Naive thymus-derived CD4-positive, alpha-beta T cell (primary cell): ENCODE measurements at regions of chr12 and their contacts with region 1.

Region 1: GRCh38 chr12:45728630-45729232 is 775 bp upstream of the ARID2 start:
- DNase-seq: peak; percentile 95 to 99 (median 98)
- ATAC-seq: peak; percentile 85
- H3K4me3 ChIP-seq: peak overlapping the region; percentile 91
- H3K4me3 Mint-ChIP-seq: peak overlapping the region; percentile 85 to 100 (median 98)
- H3K27ac ChIP-seq: peak overlapping the region; percentile 96
- H3K27ac Mint-ChIP-seq: peak overlapping the region; percentile 82 to 99 (median 99)
- H3K4me1 ChIP-seq: peaks cover 10 to 31% of the 10 kb centered on the region in 2 donors
- H3K4me1 Mint-ChIP-seq: peaks cover 13 to 39% (median 30%) of the 10 kb centered on the region in 7 donors
- H3K27me3 ChIP-seq: no peaks in the 10 kb centered on the region
- H3K27me3 Mint-ChIP-seq: no peaks in the 10 kb centered on the region

Region 2: GRCh38 chr12:43805860-43806736 is 1922.6 kb before region 1 on chr12 and contains the start of gene TWF1:
- CTCF ChIA-PET with region 1: no interaction called
- POLR2A ChIA-PET with region 1: interaction called, 4 read pairs
- intact Hi-C with region 1: loop called (anchors 1 to 2 kb)
- DNase-seq: peak; percentile 76 to 94 (median 89)
- ATAC-seq: peak; percentile 97
- H3K4me3 ChIP-seq: peak within 1 kb of the TSS; percentile 67
- H3K4me3 Mint-ChIP-seq: peak within 1 kb of the TSS; percentile 94 to 100 (median 100)
- H3K27ac ChIP-seq: peak within 1 kb of the TSS; percentile 94
- H3K27ac Mint-ChIP-seq: peak within 1 kb of the TSS; percentile 98 to 100 (median 100)
- H3K4me1 ChIP-seq: peaks cover 20 to 33% of the 10 kb centered on the region in 2 donors
- H3K4me1 Mint-ChIP-seq: peaks cover 13 to 73% (median 59%) of the 10 kb centered on the region in 7 donors
- H3K27me3 ChIP-seq: no peaks in the 10 kb centered on the region
- H3K27me3 Mint-ChIP-seq: no peaks in the 10 kb centered on the region
- total RNA-seq, gene TWF1: 26.7 to 51.2 (median 35.6) TPM

Region 3: GRCh38 chr12:45170456-45171042 is 558.2 kb before region 1 on chr12:
- CTCF ChIA-PET with region 1: no interaction called
- POLR2A ChIA-PET with region 1: no interaction called
- intact Hi-C with region 1: loop called (anchors 1 to 2 kb)
- DNase-seq: peak; percentile 42 to 77 (median 63)
- ATAC-seq: peak; percentile 76
- H3K4me3 ChIP-seq: no peak overlapping the region
- H3K4me3 Mint-ChIP-seq: no peak overlapping the region
- H3K27ac ChIP-seq: no peak overlapping the region
- H3K27ac Mint-ChIP-seq: peak overlapping the region in 1 of 9 donors; percentile 4
- H3K4me1 ChIP-seq: no peaks in the 10 kb centered on the region
- H3K4me1 Mint-ChIP-seq: peaks cover 0 to 4% (median 0%) of the 10 kb centered on the region in 7 donors
- H3K27me3 ChIP-seq: no peaks in the 10 kb centered on the region
- H3K27me3 Mint-ChIP-seq: peaks cover 0 to 7% (median 4%) of the 10 kb centered on the region in 5 donors

Region 4: GRCh38 chr12:45543906-45544315 is 184.8 kb before region 1 on chr12:
- CTCF ChIA-PET with region 1: interaction called, 23 read pairs
- POLR2A ChIA-PET with region 1: interaction called, 5 read pairs
- intact Hi-C with region 1: loop called (anchors 1 kb)
- DNase-seq: peak in 8 of 9 donors; percentile 22 to 74 (median 61)
- ATAC-seq: peak; percentile 97
- H3K4me3 ChIP-seq: no peak overlapping the region
- H3K4me3 Mint-ChIP-seq: no peak overlapping the region
- H3K27ac ChIP-seq: no peak overlapping the region
- H3K27ac Mint-ChIP-seq: peak overlapping the region in 1 of 9 donors; percentile 33
- H3K4me1 ChIP-seq: no peaks in the 10 kb centered on the region
- H3K4me1 Mint-ChIP-seq: peaks cover 0 to 6% (median 0%) of the 10 kb centered on the region in 7 donors
- H3K27me3 ChIP-seq: no peaks in the 10 kb centered on the region
- H3K27me3 Mint-ChIP-seq: peaks cover 0 to 35% (median 0%) of the 10 kb centered on the region in 5 donors

Region 5: DNA sequence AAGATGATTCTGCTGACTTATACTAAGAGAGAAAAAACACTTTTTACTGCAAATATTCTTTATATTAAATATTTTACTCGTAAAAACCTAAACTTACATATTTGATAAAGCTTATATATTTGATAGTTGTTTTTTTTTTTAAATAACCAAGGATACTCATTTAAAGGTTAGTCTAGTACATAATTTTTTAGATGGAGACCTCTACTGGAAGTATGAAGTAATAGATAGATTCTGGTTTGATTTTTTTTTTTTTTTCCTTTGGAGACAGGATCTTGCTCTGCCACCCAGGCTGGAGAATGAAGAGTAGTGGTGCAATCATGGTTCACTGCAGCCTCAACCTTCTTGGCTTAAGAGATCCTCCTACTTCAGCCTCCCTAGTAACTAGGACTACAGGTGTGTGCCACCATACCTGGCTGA is 17.1 kb after region 1 on chr12:
- CTCF ChIA-PET with region 1: interaction called, 58 read pairs
- POLR2A ChIA-PET with region 1: interaction called, 69 read pairs
- intact Hi-C with region 1: loop called (anchors 1 kb)
- DNase-seq: peak in 6 of 9 donors; percentile 20 to 58 (median 45)
- ATAC-seq: peak; percentile 77
- H3K4me3 ChIP-seq: no peak overlapping the region
- H3K4me3 Mint-ChIP-seq: peak overlapping the region in 3 of 10 donors; percentile 12 to 33 (median 20)
- H3K27ac ChIP-seq: no peak overlapping the region
- H3K27ac Mint-ChIP-seq: peak overlapping the region in 2 of 9 donors; percentile 0 to 47
- H3K4me1 ChIP-seq: peaks cover 13 to 28% of the 10 kb centered on the region in 2 donors
- H3K4me1 Mint-ChIP-seq: peaks cover 44 to 83% (median 77%) of the 10 kb centered on the region in 7 donors
- H3K27me3 ChIP-seq: no peaks in the 10 kb centered on the region
- H3K27me3 Mint-ChIP-seq: no peaks in the 10 kb centered on the region

Region 6: DNA sequence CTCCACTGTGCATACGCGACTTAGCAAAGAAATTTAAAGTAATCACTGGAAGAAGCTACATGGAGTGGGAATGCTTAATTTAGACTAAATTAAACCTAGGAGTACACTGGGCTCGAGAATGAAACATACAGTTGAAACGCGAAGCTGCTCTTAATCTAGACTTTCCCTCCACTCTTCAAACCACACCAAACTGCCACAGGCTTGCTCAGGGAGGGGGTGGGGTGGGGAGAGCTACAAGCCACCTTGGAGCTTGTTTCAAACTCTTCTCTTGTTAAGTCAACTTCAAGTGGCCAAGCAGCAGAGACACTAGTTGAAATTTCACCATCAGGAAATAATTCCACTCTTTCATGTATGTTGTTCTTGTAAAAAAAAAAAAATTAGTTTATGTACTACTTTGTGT is 470.2 kb after region 1 on chr12:
- CTCF ChIA-PET with region 1: no interaction called
- POLR2A ChIA-PET with region 1: no interaction called
- intact Hi-C with region 1: no loop called
- DNase-seq: no peak
- ATAC-seq: no peak
- H3K4me3 ChIP-seq: no peak overlapping the region
- H3K4me3 Mint-ChIP-seq: peak overlapping the region in 1 of 10 donors; percentile 27
- H3K27ac ChIP-seq: no peak overlapping the region
- H3K27ac Mint-ChIP-seq: peak overlapping the region in 8 of 9 donors; percentile 3 to 90 (median 71)
- H3K4me1 ChIP-seq: no peaks in the 10 kb centered on the region
- H3K4me1 Mint-ChIP-seq: peaks cover 4 to 42% (median 40%) of the 10 kb centered on the region in 7 donors
- H3K27me3 ChIP-seq: no peaks in the 10 kb centered on the region
- H3K27me3 Mint-ChIP-seq: no peaks in the 10 kb centered on the region

Region 7: GRCh38 chr12:46268590-46269558 is 540.1 kb after region 1 on chr12 and contains the start of gene SLC38A1:
- CTCF ChIA-PET with region 1: interaction called, 3 read pairs
- POLR2A ChIA-PET with region 1: interaction called, 5 read pairs
- intact Hi-C with region 1: loop called (anchors 1 to 2 kb)
- DNase-seq: peak; percentile 73 to 92 (median 88)
- ATAC-seq: peak; percentile 81
- H3K4me3 ChIP-seq: peak within 1 kb of the TSS; percentile 93
- H3K4me3 Mint-ChIP-seq: no peak within 1 kb of the TSS
- H3K27ac ChIP-seq: peak within 1 kb of the TSS; percentile 98
- H3K27ac Mint-ChIP-seq: no peak within 1 kb of the TSS
- H3K4me1 ChIP-seq: peaks cover 35 to 40% of the 10 kb centered on the region in 2 donors
- H3K4me1 Mint-ChIP-seq: peaks cover 9 to 35% (median 31%) of the 10 kb centered on the region in 7 donors
- H3K27me3 ChIP-seq: no peaks in the 10 kb centered on the region
- H3K27me3 Mint-ChIP-seq: no peaks in the 10 kb centered on the region
- total RNA-seq, gene SLC38A1: 172 to 283 (median 249) TPM

Region 8: GRCh38 chr12:47276621-47277309 is 1548.0 kb after region 1 on chr12:
- CTCF ChIA-PET with region 1: no interaction called
- POLR2A ChIA-PET with region 1: no interaction called
- intact Hi-C with region 1: loop called in 1 of 2 experiments (anchors 5 kb)
- DNase-seq: peak; percentile 12 to 89 (median 84)
- ATAC-seq: peak; percentile 97
- H3K4me3 ChIP-seq: peak overlapping the region; percentile 31
- H3K4me3 Mint-ChIP-seq: peak overlapping the region; percentile 51 to 83 (median 74)
- H3K27ac ChIP-seq: peak overlapping the region; percentile 69
- H3K27ac Mint-ChIP-seq: peak overlapping the region; percentile 90 to 98 (median 92)
- H3K4me1 ChIP-seq: peaks cover 28 to 73% of the 10 kb centered on the region in 2 donors
- H3K4me1 Mint-ChIP-seq: peaks cover 42 to 97% (median 90%) of the 10 kb centered on the region in 7 donors
- H3K27me3 ChIP-seq: no peaks in the 10 kb centered on the region
- H3K27me3 Mint-ChIP-seq: no peaks in the 10 kb centered on the region